ENCODE measurements at regions of chr10 and their contacts with region 1.

Region 1: DNA sequence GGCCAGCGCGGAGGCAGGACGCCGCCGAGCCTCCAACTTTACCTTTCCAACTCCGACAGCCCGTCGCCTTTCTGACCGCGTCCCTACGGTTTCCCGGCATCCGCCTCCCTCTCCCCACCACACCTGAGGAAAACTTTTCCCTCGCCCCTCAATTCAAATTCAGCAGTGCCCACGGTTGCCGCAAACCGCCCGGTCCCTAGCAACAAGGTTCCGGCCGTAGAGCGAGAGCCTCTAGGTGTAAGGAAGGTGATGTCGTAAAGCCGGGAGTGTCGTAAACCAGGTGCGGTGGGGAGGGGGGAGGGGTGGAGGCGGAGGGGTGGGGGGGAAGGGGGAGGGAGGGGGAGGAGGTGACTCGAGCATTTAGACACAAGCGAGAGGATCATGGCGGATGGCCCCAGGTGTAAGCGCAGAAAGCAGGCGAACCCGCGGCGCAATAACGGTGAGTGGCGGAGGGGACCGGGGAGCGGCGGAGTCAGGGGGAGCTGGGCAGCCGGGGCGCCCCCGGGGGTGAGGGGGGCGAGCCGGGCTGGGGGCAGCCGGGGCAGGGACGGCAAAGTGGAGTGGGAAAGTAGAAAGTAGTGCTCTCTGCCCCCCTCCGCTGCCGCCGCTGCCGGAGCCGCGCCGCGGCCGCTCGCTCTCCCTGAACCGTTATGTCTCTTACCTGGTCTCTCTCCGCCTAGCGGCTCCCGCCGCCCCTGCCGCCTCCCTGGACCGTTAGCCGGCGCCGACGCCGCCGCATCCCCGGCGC is at the start of gene ZEB1:
- DNase-seq: peak; percentile 86
- H3K4me3 ChIP-seq: peak within 1 kb of the TSS; percentile 76 to 98 (median 98)
- H3K27ac ChIP-seq: peak within 1 kb of the TSS; percentile 72
- H3K4me1 ChIP-seq: peaks cover 21% of the 10 kb centered on the region
- H3K27me3 ChIP-seq: peaks cover 26% of the 10 kb centered on the region
- CTCF ChIP-seq: peak; percentile 12 to 54
- total RNA-seq, gene ZEB1: 1.2 to 1.3 TPM

Region 2: GRCh38 chr10:31083765-31084184 is 235.3 kb before region 1 on chr10:
- CTCF ChIA-PET with region 1: no interaction called
- dilution Hi-C with region 1: no loop called
- in situ Hi-C with region 1: no loop called
- intact Hi-C with region 1: loop called (anchors 5 kb)
- DNase-seq: peak; percentile 56
- H3K4me3 ChIP-seq: no peak overlapping the region
- H3K27ac ChIP-seq: no peak overlapping the region
- H3K4me1 ChIP-seq: peaks cover 3% of the 10 kb centered on the region
- H3K27me3 ChIP-seq: no peaks in the 10 kb centered on the region
- CTCF ChIP-seq: peak; percentile 67 to 68

Region 3: DNA sequence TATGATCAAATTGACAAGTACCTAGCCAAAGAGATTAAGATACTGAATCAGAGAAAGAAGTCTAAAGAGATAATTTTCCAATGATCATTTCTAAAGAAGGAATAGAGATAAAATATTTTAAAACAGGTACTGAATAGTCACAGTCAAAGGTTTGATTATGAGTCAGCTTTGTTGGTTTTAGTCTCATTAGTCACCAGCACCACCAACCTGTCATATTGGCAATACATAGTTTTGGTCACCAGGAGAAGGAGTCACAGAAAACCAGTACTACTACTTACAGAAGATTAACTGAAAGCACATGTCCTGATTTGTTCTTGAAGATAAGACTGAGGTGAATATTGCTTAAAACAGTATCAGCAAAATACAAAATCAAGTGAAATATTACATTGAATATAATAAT is 34.5 kb after region 1 on chr10:
- CTCF ChIA-PET with region 1: no interaction called
- dilution Hi-C with region 1: no loop called
- in situ Hi-C with region 1: no loop called
- intact Hi-C with region 1: loop called (anchors 5 kb)
- DNase-seq: peak; percentile 92
- H3K4me3 ChIP-seq: peak overlapping the region in 1 of 3 experiments; percentile 17
- H3K27ac ChIP-seq: peak overlapping the region; percentile 36
- H3K4me1 ChIP-seq: peaks cover 18% of the 10 kb centered on the region
- H3K27me3 ChIP-seq: no peaks in the 10 kb centered on the region
- CTCF ChIP-seq: peak in 1 of 2 donors; percentile 40